ENCODE measurements at regions of chr10 and their contacts with region 1.

Region 1: DNA sequence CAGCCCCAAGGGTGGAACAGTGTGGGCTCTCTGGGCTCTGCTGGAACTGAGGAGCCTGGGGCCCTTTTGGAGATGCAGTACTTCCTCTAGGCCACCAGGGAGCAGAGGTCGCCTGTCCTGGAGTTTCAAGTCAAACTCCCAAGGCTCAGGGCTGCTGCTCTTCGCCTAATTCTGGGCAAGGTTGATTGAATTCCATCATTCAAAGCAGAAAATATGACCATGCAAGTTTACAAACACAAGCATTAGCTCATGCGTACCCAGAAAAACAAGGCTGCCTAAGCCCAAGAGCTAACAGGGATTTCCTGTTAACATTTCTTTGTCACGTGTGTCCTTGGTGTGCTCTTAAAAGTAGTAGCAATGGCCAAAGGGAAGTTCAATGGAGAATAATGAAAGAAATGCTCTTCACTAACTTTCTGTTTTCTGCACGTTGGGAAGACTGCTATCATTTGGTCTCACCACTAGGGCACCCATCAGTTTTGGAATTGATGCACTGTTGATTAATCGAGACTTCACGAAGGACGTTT is 20.1 kb downstream of the LDB3 start:
- DNase-seq: peak in 4 of 5 donors; percentile 52 to 73 (median 70)
- ATAC-seq: no peak
- H3K4me3 ChIP-seq: no peak overlapping the region
- H3K27ac ChIP-seq: peak overlapping the region in 11 of 12 donors; percentile 22 to 99 (median 40)
- H3K4me1 ChIP-seq: peaks cover 0 to 72% (median 25%) of the 10 kb centered on the region in 12 donors
- H3K27me3 ChIP-seq: peaks cover 0 to 2% (median 0%) of the 10 kb centered on the region in 9 donors
- CTCF ChIP-seq: peak; percentile 68 to 85 (median 80)
- POLR2A ChIP-seq: no peak

Region 2: GRCh38 chr10:86644152-86644793 is 44.2 kb before region 1 on chr10:
- intact Hi-C with region 1: loop called in 1 of 10 experiments (anchors 5 kb)
- DNase-seq: peak in 2 of 5 donors; percentile 61 to 66
- ATAC-seq: peak in 2 of 4 donors; percentile 3 to 20
- H3K4me3 ChIP-seq: no peak overlapping the region
- H3K27ac ChIP-seq: peak overlapping the region in 1 of 12 donors; percentile 5
- H3K4me1 ChIP-seq: peaks cover 0 to 29% (median 15%) of the 10 kb centered on the region in 12 donors
- H3K27me3 ChIP-seq: no peaks in the 10 kb centered on the region
- CTCF ChIP-seq: peak in 7 of 12 donors; percentile 9 to 41 (median 21)
- POLR2A ChIP-seq: no peak

Measured in heart left ventricle (tissue), 16 donors.